ENCODE measurements at regions of chr11 and their contacts with region 1.

Region 1: GRCh38 chr11:3091791-3092602 is 34.8 kb upstream of the CARS1 start:
- DNase-seq: peak; percentile 54 to 82 (median 70)
- H3K4me3 ChIP-seq: no peak overlapping the region
- H3K27ac ChIP-seq: no peak overlapping the region
- H3K4me1 ChIP-seq: peaks cover 0 to 5% of the 10 kb centered on the region in 2 donors
- H3K27me3 ChIP-seq: no peaks in the 10 kb centered on the region
- CTCF ChIP-seq: peak; percentile 97 to 99 (median 98)
- POLR2A ChIP-seq: no peak

Region 2: DNA sequence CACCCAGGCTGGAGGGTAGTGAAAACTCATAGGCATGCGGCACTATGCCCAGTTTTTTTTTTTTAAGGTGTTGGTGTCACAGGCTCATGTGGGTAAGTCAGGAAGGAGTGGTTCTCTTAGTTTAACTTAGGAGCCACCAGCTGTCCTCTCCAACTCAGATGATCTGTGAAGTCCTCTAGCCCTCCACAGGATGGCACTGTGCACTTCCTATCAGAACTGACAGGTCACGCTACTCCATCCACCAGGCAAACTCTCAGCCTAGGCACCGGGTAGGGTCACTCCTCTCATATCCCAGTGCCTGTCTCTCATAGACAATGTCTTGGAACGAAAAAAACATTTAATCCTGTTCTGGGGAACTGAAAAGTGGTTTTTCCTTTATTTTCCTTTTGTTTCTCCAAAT is 116.4 kb before region 1 on chr11:
- intact Hi-C with region 1: no loop called
- DNase-seq: peak in 1 of 7 donors; percentile 37
- H3K4me3 ChIP-seq: no peak overlapping the region
- H3K27ac ChIP-seq: no peak overlapping the region
- H3K4me1 ChIP-seq: no peaks in the 10 kb centered on the region
- H3K27me3 ChIP-seq: no peaks in the 10 kb centered on the region
- CTCF ChIP-seq: peak in 5 of 6 experiments; percentile 22 to 50 (median 40)
- POLR2A ChIP-seq: no peak

Region 3: DNA sequence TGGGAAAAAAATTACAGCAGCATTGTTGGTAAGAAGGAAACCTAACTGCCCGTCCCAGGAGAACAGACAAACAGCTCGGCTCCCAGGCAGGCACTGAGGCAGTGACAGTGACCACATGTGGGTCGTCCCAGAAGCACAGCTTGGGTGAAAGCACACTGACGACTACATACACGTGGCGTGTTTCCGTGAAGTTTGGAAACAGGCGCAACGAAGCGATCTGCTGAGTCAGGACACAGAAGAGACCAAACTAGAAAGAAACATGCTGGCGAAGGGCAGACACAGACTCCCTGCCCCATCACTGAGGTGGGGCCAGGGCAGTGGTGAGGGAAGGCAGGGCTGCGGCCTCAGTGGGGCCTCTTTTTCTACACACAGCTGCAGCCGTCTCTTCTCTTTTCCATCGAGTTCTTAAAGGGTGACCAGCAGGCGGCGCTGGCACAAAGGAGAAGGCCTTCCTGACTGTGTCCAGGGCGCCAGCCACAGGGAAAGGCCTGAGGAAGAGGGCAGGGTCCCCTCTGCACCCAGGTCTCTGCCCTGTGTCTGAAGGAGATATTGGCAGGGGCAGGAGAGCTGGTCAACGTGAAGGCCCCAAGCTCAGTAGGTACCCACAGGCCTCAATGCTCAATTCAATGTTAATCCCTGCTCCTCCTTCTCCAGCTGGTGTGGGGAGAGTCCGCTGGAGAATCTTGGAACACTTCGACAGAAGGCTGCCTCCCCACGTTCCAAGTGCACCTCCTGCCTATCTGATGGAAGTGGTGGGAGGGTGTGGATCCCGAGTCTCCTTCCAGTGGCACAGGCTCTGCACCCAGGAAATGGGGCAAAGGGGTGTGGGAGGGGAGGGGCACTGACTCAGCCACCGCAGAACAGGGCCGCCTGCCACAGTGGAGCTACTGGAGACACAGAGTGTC is 54.7 kb before region 1 on chr11:
- intact Hi-C with region 1: loop called (anchors 2 kb)
- DNase-seq: peak; percentile 69 to 91 (median 84)
- H3K4me3 ChIP-seq: no peak overlapping the region
- H3K27ac ChIP-seq: peak overlapping the region in 1 of 5 donors; percentile 50
- H3K4me1 ChIP-seq: no peaks in the 10 kb centered on the region
- H3K27me3 ChIP-seq: no peaks in the 10 kb centered on the region
- CTCF ChIP-seq: peak; percentile 75 to 88 (median 80)
- POLR2A ChIP-seq: no peak

Region 4: GRCh38 chr11:3195251-3196160 is 103.5 kb after region 1 on chr11:
- intact Hi-C with region 1: no loop called
- DNase-seq: peak in 3 of 7 donors; percentile 18 to 35 (median 23)
- H3K4me3 ChIP-seq: no peak overlapping the region
- H3K27ac ChIP-seq: peak overlapping the region in 2 of 5 donors; percentile 26 to 75
- H3K4me1 ChIP-seq: peaks cover 0 to 4% of the 10 kb centered on the region in 2 donors
- H3K27me3 ChIP-seq: no peaks in the 10 kb centered on the region
- CTCF ChIP-seq: peak in 1 of 6 experiments; percentile 17
- POLR2A ChIP-seq: no peak

Measured in adrenal gland (tissue), 19 donors.